Activated CD4-positive, alpha-beta T cell treated with anti-CD3 and anti-CD28 coated beads, Interleukin-2, amount 10 ng/mL, durations not matched to agents 24 days and 14 days (primary cell): ENCODE measurements at regions of chr15 and their contacts with region 1.

Region 1: DNA sequence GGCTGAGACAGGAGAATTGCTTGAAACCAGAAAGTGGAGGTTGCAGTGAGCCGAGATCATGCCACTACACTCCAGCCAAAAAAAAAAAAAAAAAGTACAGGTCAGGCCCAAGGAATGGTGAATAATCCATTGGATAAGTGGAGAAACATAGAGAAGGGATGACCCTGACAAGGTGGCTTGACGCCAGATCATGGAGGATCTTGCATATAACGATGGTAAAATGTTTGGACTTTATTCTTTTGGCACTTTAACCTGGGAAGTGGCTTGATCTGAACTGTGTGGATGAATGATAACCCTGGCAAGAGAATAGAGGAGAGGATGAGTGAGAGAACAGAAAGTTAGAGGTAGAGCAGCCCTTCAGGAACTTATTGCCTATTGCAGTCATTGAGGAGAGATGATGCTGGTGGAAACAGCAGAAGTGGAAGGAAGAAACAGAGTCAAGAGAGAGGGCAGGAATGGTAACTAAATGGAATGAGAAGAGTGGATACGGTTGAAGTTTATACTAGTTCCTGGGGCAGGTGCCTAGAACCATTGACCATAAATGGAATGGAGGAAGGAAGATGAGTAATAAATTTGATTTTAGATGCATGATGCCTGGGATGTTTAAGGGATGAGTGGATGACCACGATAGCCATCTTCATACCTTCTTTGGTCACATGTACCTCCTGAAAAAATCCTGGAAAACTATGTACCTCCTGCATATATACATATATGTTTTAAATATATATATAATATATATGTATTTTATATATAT is 57.8 kb downstream of the BLM start:
- DNase-seq: no peak
- H3K4me3 Mint-ChIP-seq: no peak overlapping the region
- H3K27ac Mint-ChIP-seq: no peak overlapping the region
- H3K4me1 Mint-ChIP-seq: peaks cover 18% of the 10 kb centered on the region
- H3K27me3 Mint-ChIP-seq: no peaks in the 10 kb centered on the region

Region 2: DNA sequence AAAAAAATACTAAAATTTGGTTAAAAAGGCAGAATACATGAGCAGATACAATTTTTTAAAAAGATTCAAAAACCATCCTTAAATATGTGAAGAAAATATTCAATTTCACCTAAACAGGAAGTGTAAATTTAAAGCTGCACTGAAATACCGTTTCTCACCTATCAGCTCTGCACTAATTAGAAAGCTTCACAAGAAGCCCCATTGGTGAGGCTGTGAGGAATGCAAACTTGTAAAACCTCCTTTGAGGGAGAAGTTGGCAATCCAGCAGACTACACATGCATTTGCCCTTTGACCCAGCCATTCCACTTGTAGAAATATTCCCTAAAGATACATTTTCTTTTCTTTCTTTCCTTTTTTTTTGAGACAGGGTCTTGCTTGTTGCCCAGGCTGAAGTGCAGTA is 39.0 kb before region 1 on chr15:
- intact Hi-C with region 1: loop called (anchors 5 kb)
- DNase-seq: peak; percentile 51
- H3K4me3 Mint-ChIP-seq: peak overlapping the region; percentile 43
- H3K27ac Mint-ChIP-seq: no peak overlapping the region
- H3K4me1 Mint-ChIP-seq: peaks cover 41% of the 10 kb centered on the region
- H3K27me3 Mint-ChIP-seq: no peaks in the 10 kb centered on the region

Region 3: DNA sequence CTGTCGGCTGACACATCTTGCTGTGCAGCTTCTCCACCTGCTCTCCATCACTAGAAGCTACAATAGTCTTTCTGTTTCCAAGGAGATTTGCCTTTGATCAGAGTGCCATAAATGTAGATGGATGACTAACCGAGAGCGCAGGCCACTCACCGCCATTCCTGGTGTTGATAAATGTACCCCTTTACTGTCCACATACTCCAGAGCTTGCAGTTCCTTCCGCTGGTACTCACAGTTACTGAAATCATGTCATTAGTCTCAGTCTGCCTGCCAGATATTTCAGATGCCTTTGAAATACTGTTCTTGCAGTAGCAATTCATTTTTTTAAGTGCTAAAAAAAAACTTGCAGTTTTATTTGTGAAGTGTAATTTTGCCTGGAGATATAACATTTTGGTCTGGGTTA is 14.6 kb after region 1 on chr15:
- intact Hi-C with region 1: no loop called
- DNase-seq: no peak
- H3K4me3 Mint-ChIP-seq: no peak overlapping the region
- H3K27ac Mint-ChIP-seq: no peak overlapping the region
- H3K4me1 Mint-ChIP-seq: peaks cover 21% of the 10 kb centered on the region
- H3K27me3 Mint-ChIP-seq: no peaks in the 10 kb centered on the region

Region 4: DNA sequence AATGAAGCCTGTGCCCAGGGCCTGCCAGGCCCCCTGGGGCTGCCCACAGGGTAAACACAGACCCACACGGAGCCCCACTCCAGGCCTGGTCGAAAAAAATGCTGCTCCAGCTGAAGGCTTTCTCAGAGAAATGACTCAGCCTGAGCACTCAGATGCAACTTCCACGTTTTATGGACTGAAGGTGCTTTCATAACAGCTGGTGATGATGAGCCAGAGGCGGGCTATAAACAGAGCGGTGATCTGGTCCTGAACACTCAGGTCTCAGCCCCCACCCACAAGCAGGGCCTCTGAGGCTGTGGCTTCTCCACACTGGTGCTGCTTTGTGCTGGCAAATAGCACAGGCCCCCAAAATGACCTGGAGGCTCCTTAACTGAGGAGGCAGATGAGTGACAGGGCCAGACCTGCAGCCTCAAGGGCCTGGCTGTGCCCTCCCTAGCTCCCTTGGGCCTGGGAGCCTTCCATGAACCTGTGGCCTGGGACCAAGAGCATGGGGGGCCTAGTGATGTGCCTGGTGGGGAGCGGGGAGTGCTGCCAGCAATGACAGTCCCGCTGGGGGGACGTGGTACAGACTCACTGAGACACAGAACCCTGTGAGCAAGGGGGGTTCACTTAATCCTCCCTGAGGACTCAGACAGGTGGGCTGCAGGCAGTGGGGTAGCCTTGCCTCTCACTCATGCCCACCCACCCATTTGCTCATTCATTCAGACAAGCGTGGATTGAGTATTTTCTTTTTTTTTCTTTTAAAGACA is 70.5 kb after region 1 on chr15:
- intact Hi-C with region 1: no loop called
- DNase-seq: peak; percentile 87
- H3K4me3 Mint-ChIP-seq: peak overlapping the region; percentile 52
- H3K27ac Mint-ChIP-seq: peak overlapping the region; percentile 89
- H3K4me1 Mint-ChIP-seq: peaks cover 42% of the 10 kb centered on the region
- H3K27me3 Mint-ChIP-seq: no peaks in the 10 kb centered on the region

Region 5: DNA sequence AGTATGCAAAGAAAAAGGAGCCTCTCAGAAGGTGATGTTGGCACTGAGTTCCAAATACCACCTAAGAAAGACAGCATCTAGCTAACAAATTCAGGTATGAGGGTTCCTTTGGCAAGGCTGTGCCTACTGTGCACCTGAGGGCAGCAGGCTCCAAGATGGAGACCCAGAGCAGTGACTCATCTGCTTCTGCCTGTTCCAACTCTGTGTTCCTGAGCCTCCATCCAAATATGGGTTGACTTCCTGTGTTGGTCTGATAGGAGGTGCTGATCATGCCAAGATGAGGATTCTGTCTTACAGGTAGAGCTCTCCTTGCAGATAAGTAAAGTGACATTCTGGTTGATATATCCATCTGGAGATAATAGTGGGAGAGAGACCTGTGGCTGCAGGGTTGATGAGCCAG is 351.2 kb after region 1 on chr15:
- intact Hi-C with region 1: no loop called
- DNase-seq: no peak
- H3K4me3 Mint-ChIP-seq: no peak overlapping the region
- H3K27ac Mint-ChIP-seq: no peak overlapping the region
- H3K4me1 Mint-ChIP-seq: no peaks in the 10 kb centered on the region
- H3K27me3 Mint-ChIP-seq: peaks cover 20% of the 10 kb centered on the region